CD8-positive, alpha-beta T cell (primary cell): ENCODE measurements at regions of chr10 and their contacts with region 1.

Region 1: GRCh38 chr10:117216611-117217195 is 19.4 kb downstream of the KCNK18 start:
- DNase-seq: peak; percentile 39 to 82 (median 69)
- ATAC-seq: peak; percentile 93
- H3K4me3 ChIP-seq: peak overlapping the region; percentile 49 to 55
- H3K4me3 Mint-ChIP-seq: peak overlapping the region; percentile 77
- H3K27ac ChIP-seq: no peak overlapping the region
- H3K27ac Mint-ChIP-seq: no peak overlapping the region
- H3K4me1 ChIP-seq: peaks cover 5% of the 10 kb centered on the region
- H3K4me1 Mint-ChIP-seq: peaks cover 4% of the 10 kb centered on the region
- H3K27me3 ChIP-seq: peaks cover 10 to 11% of the 10 kb centered on the region in 2 experiments
- H3K27me3 Mint-ChIP-seq: peaks cover 32% of the 10 kb centered on the region
- CTCF ChIP-seq: peak; percentile 100

Region 2: DNA sequence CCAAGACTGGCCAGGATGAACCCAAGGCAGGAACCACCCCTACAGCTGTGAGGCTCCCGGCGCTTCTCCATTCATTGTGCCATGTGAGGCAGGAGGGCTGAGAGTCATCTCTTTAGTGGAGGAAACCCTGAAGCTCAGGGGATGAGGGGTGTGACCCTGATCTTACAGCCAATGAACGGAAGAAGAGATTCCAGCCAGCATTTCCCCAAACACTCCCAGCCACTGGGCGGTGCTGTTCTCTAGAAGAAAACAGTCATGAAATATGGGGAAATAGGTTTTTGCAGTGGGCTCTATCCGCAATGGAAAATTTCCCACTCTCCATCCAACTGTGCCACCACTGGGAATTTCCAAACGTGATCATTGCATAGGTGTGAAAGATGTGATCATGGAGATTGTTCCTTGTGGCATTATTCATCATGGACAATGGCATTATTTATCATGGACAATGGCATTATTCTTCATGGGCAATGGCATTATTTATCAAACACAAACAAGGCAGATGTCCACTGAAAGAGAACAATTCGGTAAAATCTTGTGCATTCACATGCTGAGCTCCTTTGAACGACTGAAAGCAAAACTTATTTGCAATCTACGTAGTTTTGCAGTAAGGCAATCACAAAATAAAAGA is 10.2 kb after region 1 on chr10:
- CTCF ChIA-PET with region 1: interaction called, 27 read pairs
- POLR2A ChIA-PET with region 1: no interaction called
- intact Hi-C with region 1: no loop called
- DNase-seq: peak in 1 of 9 experiments; percentile 24
- ATAC-seq: no peak
- H3K4me3 ChIP-seq: no peak overlapping the region
- H3K4me3 Mint-ChIP-seq: no peak overlapping the region
- H3K27ac ChIP-seq: no peak overlapping the region
- H3K27ac Mint-ChIP-seq: no peak overlapping the region
- H3K4me1 ChIP-seq: no peaks in the 10 kb centered on the region
- H3K4me1 Mint-ChIP-seq: no peaks in the 10 kb centered on the region
- H3K27me3 ChIP-seq: no peaks in the 10 kb centered on the region
- H3K27me3 Mint-ChIP-seq: peaks cover 35% of the 10 kb centered on the region
- CTCF ChIP-seq: no peak

Region 3: GRCh38 chr10:117320050-117320665 is 103.5 kb after region 1 on chr10:
- CTCF ChIA-PET with region 1: interaction called, 61 read pairs
- POLR2A ChIA-PET with region 1: no interaction called
- intact Hi-C with region 1: loop called (anchors 1 kb)
- DNase-seq: peak in 2 of 9 experiments; percentile 28 to 48
- ATAC-seq: no peak
- H3K4me3 ChIP-seq: no peak overlapping the region
- H3K4me3 Mint-ChIP-seq: no peak overlapping the region
- H3K27ac ChIP-seq: no peak overlapping the region
- H3K27ac Mint-ChIP-seq: no peak overlapping the region
- H3K4me1 ChIP-seq: no peaks in the 10 kb centered on the region
- H3K4me1 Mint-ChIP-seq: peaks cover 16% of the 10 kb centered on the region
- H3K27me3 ChIP-seq: no peaks in the 10 kb centered on the region
- H3K27me3 Mint-ChIP-seq: no peaks in the 10 kb centered on the region
- CTCF ChIP-seq: peak; percentile 60

Region 4: GRCh38 chr10:117461766-117462423 is 245.2 kb after region 1 on chr10:
- CTCF ChIA-PET with region 1: interaction called, 3 read pairs
- POLR2A ChIA-PET with region 1: no interaction called
- intact Hi-C with region 1: loop called in 1 of 2 experiments (anchors 10 kb)
- DNase-seq: no peak
- ATAC-seq: no peak
- H3K4me3 ChIP-seq: no peak overlapping the region
- H3K4me3 Mint-ChIP-seq: no peak overlapping the region
- H3K27ac ChIP-seq: no peak overlapping the region
- H3K27ac Mint-ChIP-seq: no peak overlapping the region
- H3K4me1 ChIP-seq: no peaks in the 10 kb centered on the region
- H3K4me1 Mint-ChIP-seq: no peaks in the 10 kb centered on the region
- H3K27me3 ChIP-seq: no peaks in the 10 kb centered on the region
- H3K27me3 Mint-ChIP-seq: peaks cover 6% of the 10 kb centered on the region
- CTCF ChIP-seq: no peak